ENCODE measurements at regions of chr12 and their contacts with region 1.

Region 1: GRCh38 chr12:98397316-98398105 is 117.9 kb upstream of the TMPO start:
- DNase-seq: peak; percentile 78 to 80 (median 79)
- H3K4me3 ChIP-seq: peak overlapping the region in 1 of 2 donors; percentile 46
- H3K4me3 Mint-ChIP-seq: peak overlapping the region; percentile 84 to 93 (median 88)
- H3K27ac ChIP-seq: peak overlapping the region; percentile 35
- H3K27ac Mint-ChIP-seq: peak overlapping the region; percentile 61 to 93 (median 88)
- H3K4me1 ChIP-seq: peaks cover 22% of the 10 kb centered on the region
- H3K4me1 Mint-ChIP-seq: peaks cover 24 to 39% (median 27%) of the 10 kb centered on the region in 4 donors
- H3K27me3 ChIP-seq: no peaks in the 10 kb centered on the region
- H3K27me3 Mint-ChIP-seq: no peaks in the 10 kb centered on the region

Region 2: DNA sequence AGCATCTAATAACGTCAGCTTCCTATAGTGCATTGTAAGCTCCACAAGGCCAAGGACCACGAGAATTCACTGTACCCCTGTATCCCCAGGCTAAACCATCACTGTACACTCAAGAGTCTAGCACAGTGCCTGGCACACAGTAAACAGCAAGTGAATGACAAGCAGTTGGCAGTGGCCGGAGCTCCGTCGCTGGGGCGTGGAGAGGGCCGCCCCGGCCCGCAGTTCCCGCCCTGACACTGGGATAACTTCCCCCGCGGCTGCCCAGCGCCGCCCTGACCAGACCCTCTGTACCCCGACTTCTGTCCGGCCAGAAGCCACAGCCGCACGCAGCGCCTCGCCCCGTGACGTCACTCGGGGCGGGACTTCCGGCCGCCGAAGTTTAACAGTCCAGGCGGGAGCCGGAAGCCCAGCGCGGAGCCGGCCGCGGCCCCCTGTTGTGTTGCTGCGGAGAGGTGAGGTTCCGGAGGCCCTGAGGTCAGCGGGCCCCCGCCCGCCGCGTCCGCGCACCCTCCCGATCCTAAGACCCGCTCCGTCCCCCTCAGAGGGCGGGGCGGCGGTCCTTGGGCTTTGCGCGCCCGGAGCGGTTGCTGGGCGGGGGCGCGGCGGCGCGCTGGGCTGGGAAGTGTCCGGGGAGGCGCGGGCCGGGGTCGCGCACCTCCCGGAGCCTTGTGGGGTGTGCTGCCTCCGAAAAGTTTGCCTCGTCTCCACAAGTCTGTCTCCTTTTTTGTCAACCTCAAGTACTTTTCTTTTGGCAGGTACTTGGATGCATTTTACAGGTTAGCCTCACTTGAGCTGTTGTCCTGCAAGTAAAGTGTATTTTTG is 1490.5 kb before region 1 on chr12 and contains the start of gene NEDD1:
- CTCF ChIA-PET with region 1: no interaction called
- POLR2A ChIA-PET with region 1: no interaction called
- intact Hi-C with region 1: loop called (anchors 1 kb)
- DNase-seq: peak; percentile 81 to 86 (median 82)
- H3K4me3 ChIP-seq: peak within 1 kb of the TSS; percentile 80 to 97
- H3K4me3 Mint-ChIP-seq: peak within 1 kb of the TSS; percentile 93 to 98 (median 96)
- H3K27ac ChIP-seq: peak within 1 kb of the TSS; percentile 96
- H3K27ac Mint-ChIP-seq: peak within 1 kb of the TSS; percentile 94 to 99 (median 99)
- H3K4me1 ChIP-seq: peaks cover 46% of the 10 kb centered on the region
- H3K4me1 Mint-ChIP-seq: peaks cover 37 to 55% (median 44%) of the 10 kb centered on the region in 4 donors
- H3K27me3 ChIP-seq: no peaks in the 10 kb centered on the region
- H3K27me3 Mint-ChIP-seq: peaks cover 0 to 2% of the 10 kb centered on the region in 2 donors
- total RNA-seq, gene NEDD1: 24.6 to 27.9 TPM

Region 3: DNA sequence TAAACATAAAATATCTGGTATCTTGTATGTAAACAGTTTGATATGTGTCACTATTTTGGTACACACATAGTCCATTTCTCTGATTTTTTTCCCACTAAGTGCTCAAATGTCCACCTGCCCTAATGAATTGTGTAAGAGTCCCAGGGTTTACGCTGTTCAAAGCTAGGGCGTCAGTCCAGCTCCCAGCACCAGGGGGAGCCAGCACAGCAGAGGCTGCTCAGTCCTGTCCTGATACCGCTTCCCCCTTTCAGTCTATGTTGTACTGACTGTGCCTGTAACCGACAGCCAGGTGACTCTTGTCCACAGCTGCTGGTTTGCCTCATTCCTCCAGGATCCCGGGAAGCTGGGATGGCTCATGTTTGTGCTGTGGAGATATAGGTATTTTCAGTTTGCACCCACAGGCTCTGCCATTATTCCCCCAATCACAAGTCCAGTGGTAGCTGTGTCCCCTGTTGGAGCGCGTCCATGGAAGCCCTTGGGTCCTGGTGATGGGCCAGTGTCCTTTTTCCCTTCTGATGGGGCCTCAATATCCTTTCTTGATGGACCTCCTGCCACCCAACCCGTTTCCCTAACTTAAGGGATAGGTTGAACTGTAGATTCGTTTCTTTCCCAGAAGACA is 1248.5 kb before region 1 on chr12:
- CTCF ChIA-PET with region 1: interaction called, 10 read pairs
- POLR2A ChIA-PET with region 1: no interaction called
- intact Hi-C with region 1: no loop called
- DNase-seq: peak in 4 of 5 donors; percentile 13 to 25 (median 20)
- H3K4me3 ChIP-seq: no peak overlapping the region
- H3K4me3 Mint-ChIP-seq: no peak overlapping the region
- H3K27ac ChIP-seq: no peak overlapping the region
- H3K27ac Mint-ChIP-seq: no peak overlapping the region
- H3K4me1 ChIP-seq: no peaks in the 10 kb centered on the region
- H3K4me1 Mint-ChIP-seq: no peaks in the 10 kb centered on the region
- H3K27me3 ChIP-seq: no peaks in the 10 kb centered on the region
- H3K27me3 Mint-ChIP-seq: peaks cover 8 to 10% of the 10 kb centered on the region in 2 donors

Region 4: GRCh38 chr12:97960754-97961608 is 436.5 kb before region 1 on chr12:
- CTCF ChIA-PET with region 1: no interaction called
- POLR2A ChIA-PET with region 1: no interaction called
- intact Hi-C with region 1: loop called (anchors 5 kb)
- DNase-seq: peak in 1 of 5 donors; percentile 7
- H3K4me3 ChIP-seq: no peak overlapping the region
- H3K4me3 Mint-ChIP-seq: no peak overlapping the region
- H3K27ac ChIP-seq: no peak overlapping the region
- H3K27ac Mint-ChIP-seq: no peak overlapping the region
- H3K4me1 ChIP-seq: no peaks in the 10 kb centered on the region
- H3K4me1 Mint-ChIP-seq: no peaks in the 10 kb centered on the region
- H3K27me3 ChIP-seq: no peaks in the 10 kb centered on the region
- H3K27me3 Mint-ChIP-seq: no peaks in the 10 kb centered on the region

Region 5: DNA sequence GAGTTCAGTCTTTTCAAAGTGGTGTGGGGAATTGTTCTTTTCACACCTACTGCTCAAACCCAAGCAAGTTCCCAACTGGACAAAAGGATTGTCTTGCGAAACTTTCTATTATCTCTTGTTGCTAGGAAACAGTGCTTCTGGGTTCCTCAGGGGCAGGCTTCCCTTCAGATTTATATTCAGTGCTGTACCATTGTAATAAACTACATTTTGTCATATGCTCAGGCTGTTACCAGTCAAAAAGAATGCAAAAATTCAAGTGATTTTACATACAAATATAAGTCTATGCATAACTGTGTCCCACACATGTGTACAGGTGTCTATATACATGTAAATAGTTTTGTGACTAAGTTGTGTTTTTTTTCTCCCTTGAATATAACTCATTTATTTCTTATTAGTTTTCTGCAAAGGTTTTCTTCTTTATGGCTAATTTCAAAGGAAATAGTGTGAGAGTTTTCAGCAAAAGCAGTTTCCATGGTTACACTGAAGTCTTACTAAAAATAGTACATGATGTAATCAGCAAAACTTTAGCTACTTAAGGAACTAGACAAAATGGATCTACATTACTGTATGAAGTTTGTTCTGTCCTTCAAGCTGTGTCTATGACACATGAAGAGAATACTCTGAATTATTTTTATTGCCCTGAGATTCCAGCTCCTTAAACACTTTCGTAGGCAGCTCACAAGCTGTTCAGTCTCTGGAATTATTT is 312.3 kb before region 1 on chr12:
- CTCF ChIA-PET with region 1: no interaction called
- POLR2A ChIA-PET with region 1: no interaction called
- intact Hi-C with region 1: no loop called
- DNase-seq: no peak
- H3K4me3 ChIP-seq: no peak overlapping the region
- H3K4me3 Mint-ChIP-seq: no peak overlapping the region
- H3K27ac ChIP-seq: no peak overlapping the region
- H3K27ac Mint-ChIP-seq: no peak overlapping the region
- H3K4me1 ChIP-seq: no peaks in the 10 kb centered on the region
- H3K4me1 Mint-ChIP-seq: no peaks in the 10 kb centered on the region
- H3K27me3 ChIP-seq: no peaks in the 10 kb centered on the region
- H3K27me3 Mint-ChIP-seq: peaks cover 2 to 7% of the 10 kb centered on the region in 2 donors

Region 6: GRCh38 chr12:98424726-98425401 is 27.4 kb after region 1 on chr12:
- CTCF ChIA-PET with region 1: interaction called, 11 read pairs
- POLR2A ChIA-PET with region 1: no interaction called
- intact Hi-C with region 1: loop called (anchors 1 kb)
- DNase-seq: peak in 4 of 5 donors; percentile 35 to 46 (median 40)
- H3K4me3 ChIP-seq: no peak overlapping the region
- H3K4me3 Mint-ChIP-seq: no peak overlapping the region
- H3K27ac ChIP-seq: no peak overlapping the region
- H3K27ac Mint-ChIP-seq: no peak overlapping the region
- H3K4me1 ChIP-seq: no peaks in the 10 kb centered on the region
- H3K4me1 Mint-ChIP-seq: peaks cover 0 to 3% (median 0%) of the 10 kb centered on the region in 4 donors
- H3K27me3 ChIP-seq: no peaks in the 10 kb centered on the region
- H3K27me3 Mint-ChIP-seq: peaks cover 3% of the 10 kb centered on the region in 2 donors